ENCODE measurements at regions of chr2 and their contacts with region 1.

Region 1: GRCh38 chr2:159615140-159615951 is 1.0 kb downstream of the BAZ2B start:
- DNase-seq: peak; percentile 78
- ATAC-seq: peak; percentile 96
- H3K4me3 ChIP-seq: peak overlapping the region; percentile 81 to 86
- H3K27ac ChIP-seq: peak overlapping the region; percentile 100
- H3K4me1 ChIP-seq: peaks cover 25% of the 10 kb centered on the region
- H3K27me3 ChIP-seq: no peaks in the 10 kb centered on the region
- CTCF ChIP-seq: no peak

Region 2: GRCh38 chr2:159297042-159297695 is 318.2 kb before region 1 on chr2:
- CTCF ChIA-PET with region 1: no interaction called
- POLR2A ChIA-PET with region 1: no interaction called
- in situ Hi-C with region 1: no loop called
- intact Hi-C with region 1: no loop called
- DNase-seq: no peak
- ATAC-seq: no peak
- H3K4me3 ChIP-seq: no peak overlapping the region
- H3K27ac ChIP-seq: no peak overlapping the region
- H3K4me1 ChIP-seq: no peaks in the 10 kb centered on the region
- H3K27me3 ChIP-seq: no peaks in the 10 kb centered on the region
- CTCF ChIP-seq: no peak

Region 3: GRCh38 chr2:159557451-159558034 is 57.8 kb before region 1 on chr2:
- CTCF ChIA-PET with region 1: no interaction called
- POLR2A ChIA-PET with region 1: interaction called, 12 read pairs
- in situ Hi-C with region 1: no loop called
- intact Hi-C with region 1: no loop called
- DNase-seq: peak; percentile 17
- ATAC-seq: peak; percentile 86
- H3K4me3 ChIP-seq: no peak overlapping the region
- H3K27ac ChIP-seq: no peak overlapping the region
- H3K4me1 ChIP-seq: no peaks in the 10 kb centered on the region
- H3K27me3 ChIP-seq: no peaks in the 10 kb centered on the region
- CTCF ChIP-seq: peak; percentile 80

Region 4: GRCh38 chr2:159712143-159712928 is 97.0 kb after region 1 on chr2 and contains the start of gene MARCHF7:
- CTCF ChIA-PET with region 1: no interaction called
- POLR2A ChIA-PET with region 1: interaction called, 8 read pairs
- in situ Hi-C with region 1: loop called (anchors 25 kb)
- intact Hi-C with region 1: loop called (anchors 5 kb)
- DNase-seq: peak; percentile 77
- ATAC-seq: peak; percentile 97
- H3K4me3 ChIP-seq: peak within 1 kb of the TSS; percentile 72 to 91
- H3K27ac ChIP-seq: peak within 1 kb of the TSS; percentile 99
- H3K4me1 ChIP-seq: peaks cover 19% of the 10 kb centered on the region
- H3K27me3 ChIP-seq: no peaks in the 10 kb centered on the region
- CTCF ChIP-seq: peak; percentile 83
- total RNA-seq, gene MARCHF7: 85.7 TPM

Region 5: DNA sequence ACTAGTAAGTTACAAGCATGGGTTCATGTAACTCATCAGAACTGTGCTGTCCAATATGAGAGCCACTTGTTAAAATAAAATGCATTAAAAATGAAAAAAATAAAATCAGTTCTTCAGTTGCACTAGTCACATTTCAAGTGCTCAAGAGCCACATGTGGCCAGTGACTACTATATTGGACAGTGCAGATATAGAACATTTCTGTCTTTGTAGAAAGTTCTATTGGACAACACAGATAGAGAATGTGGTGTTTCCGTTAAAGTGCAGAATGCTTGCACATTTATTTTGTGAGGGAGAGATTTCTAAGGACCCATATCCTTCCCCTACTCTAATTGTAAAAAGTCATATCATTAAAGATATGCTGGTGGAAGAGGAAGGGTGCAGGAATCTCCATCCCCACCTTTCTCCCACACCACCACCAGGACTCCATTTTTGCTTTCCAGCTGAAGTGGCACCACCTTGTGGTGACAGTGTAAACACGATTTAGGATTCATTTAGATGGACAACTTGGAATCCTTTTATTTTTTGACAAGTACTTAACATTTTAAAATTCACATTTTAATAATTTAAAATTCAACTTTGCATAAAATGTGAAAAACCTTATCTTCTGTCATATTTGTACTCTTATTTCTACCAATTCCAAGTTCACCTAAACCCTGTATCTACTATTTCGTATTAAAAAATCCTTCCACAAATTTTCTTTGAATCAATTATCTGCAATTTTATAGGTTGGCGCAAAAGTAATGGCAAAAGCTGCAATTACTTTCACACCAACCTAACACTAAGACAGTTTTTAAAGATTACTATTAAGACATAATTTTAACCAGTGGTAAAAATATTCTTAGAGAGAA is 192.1 kb after region 1 on chr2:
- CTCF ChIA-PET with region 1: no interaction called
- POLR2A ChIA-PET with region 1: no interaction called
- in situ Hi-C with region 1: no loop called
- intact Hi-C with region 1: no loop called
- DNase-seq: peak; percentile 18
- ATAC-seq: peak; percentile 78; the same call in 1 of the 2 replicates
- H3K4me3 ChIP-seq: no peak overlapping the region
- H3K27ac ChIP-seq: no peak overlapping the region
- H3K4me1 ChIP-seq: no peaks in the 10 kb centered on the region
- H3K27me3 ChIP-seq: peaks cover 5% of the 10 kb centered on the region; the same call in 1 of the 2 replicates
- CTCF ChIP-seq: peak; percentile 84

Region 6: DNA sequence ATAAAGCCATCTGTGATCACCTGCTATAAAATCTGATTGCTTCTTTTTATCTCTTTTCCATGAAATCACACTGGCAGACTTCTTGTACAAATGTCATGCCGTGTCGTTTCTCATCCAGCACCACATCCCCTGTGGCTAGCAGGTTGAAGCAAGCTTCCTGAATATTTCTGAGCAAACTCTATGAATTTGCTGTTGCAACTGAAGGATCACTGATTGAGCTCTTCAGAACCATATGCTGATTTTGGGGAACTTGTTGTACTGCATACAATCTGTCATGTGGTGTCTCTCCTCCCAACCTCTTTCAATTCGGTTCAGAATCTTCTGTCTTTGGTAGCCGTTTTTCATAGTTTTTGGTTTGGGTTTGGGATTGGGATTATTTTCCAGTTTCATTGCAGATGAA is 935.9 kb after region 1 on chr2:
- CTCF ChIA-PET with region 1: no interaction called
- POLR2A ChIA-PET with region 1: no interaction called
- in situ Hi-C with region 1: no loop called
- intact Hi-C with region 1: no loop called
- DNase-seq: no peak
- ATAC-seq: no peak
- H3K4me3 ChIP-seq: no peak overlapping the region
- H3K27ac ChIP-seq: no peak overlapping the region
- H3K4me1 ChIP-seq: no peaks in the 10 kb centered on the region
- H3K27me3 ChIP-seq: no peaks in the 10 kb centered on the region
- CTCF ChIP-seq: no peak

Measured in Panc1 (cell line).